Activated T-helper 1 cell treated with anti-CD3 and anti-CD28 coated beads, Interleukin-12 subunit alpha, Interleukin-12 subunit beta, Interleukin-2, Interleukin-4 antibody, amounts not matched to agents 30 ng/mL and 10 ng/mL and 1 ng/mL, durations not matched to agents 14 hours and 24 hours and 36 hours (primary cell): ENCODE measurements at regions of chr11 and their contacts with region 1.

Region 1: GRCh38 chr11:128290106-128290840 is 297.1 kb downstream of the ETS1 start:
- DNase-seq: peak; percentile 76
- H3K4me3 Mint-ChIP-seq: peak overlapping the region; percentile 90
- H3K27ac Mint-ChIP-seq: peak overlapping the region; percentile 98
- H3K4me1 Mint-ChIP-seq: peaks cover 100% of the 10 kb centered on the region
- H3K27me3 Mint-ChIP-seq: peaks cover 1% of the 10 kb centered on the region

Region 2: DNA sequence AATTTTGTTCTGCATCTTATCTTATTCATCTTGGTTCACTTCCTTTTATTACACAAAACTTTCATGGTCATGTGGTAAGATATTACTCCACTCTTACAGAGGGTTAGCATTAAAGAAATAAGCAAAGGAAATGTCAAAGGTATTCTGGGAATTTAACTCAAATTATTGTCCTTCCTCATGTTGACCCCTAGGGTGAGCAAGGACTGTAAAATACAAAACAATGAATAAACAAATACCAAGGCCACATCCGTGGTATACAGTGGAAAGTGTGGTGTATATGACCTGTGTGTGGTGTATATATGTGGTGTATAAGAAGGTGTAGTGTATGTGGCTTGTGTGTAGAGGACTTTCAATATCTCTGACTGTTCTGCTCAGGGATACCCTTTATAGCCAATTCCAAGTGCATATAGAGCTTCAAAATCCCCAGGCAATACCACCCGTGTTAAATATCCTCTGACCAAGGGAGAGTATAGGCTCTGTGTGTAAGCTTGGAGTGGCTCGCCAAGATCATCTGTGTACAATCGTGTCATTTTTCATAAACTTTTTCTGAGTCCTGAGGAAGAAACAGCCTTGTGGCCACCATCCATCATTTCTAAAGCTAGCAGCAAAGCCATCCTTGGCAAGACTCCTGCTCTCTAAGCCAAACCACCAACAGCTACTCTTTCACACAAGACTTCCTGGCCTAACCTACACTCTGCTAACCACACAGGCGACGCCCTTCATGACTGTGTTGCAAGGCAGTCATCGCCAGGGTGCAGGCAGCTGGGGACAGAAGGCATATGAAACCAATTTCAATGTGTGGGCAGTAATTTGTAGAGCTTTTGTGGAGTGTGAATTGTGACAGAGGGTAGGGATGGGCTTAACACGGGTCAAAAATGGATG is 250.9 kb before region 1 on chr11:
- intact Hi-C with region 1: loop called (anchors 1 kb)
- DNase-seq: peak; percentile 77
- H3K4me3 Mint-ChIP-seq: peak overlapping the region; percentile 68
- H3K27ac Mint-ChIP-seq: peak overlapping the region; percentile 92
- H3K4me1 Mint-ChIP-seq: peaks cover 34% of the 10 kb centered on the region
- H3K27me3 Mint-ChIP-seq: no peaks in the 10 kb centered on the region

Region 3: DNA sequence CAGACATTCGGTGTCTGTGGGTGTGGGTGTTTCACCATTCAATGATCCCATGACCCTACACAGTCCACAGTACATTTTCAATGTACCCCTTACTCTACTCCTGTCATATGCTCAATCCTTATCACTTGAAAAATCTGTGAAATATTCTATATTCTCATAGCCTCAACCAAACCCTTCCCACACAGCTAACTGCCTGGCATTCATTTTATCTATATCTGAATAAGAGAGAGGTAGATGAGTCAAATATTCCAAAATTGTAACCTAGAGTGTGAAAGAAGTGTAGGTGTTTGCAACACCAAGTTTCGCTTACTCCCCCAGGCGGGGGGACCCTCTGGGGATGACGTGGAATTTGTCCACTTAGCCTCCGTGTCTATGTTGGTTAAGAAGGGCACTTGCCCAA is 57.7 kb before region 1 on chr11:
- intact Hi-C with region 1: loop called (anchors 1 kb)
- DNase-seq: no peak
- H3K4me3 Mint-ChIP-seq: peak overlapping the region; percentile 58
- H3K27ac Mint-ChIP-seq: peak overlapping the region; percentile 85
- H3K4me1 Mint-ChIP-seq: peaks cover 58% of the 10 kb centered on the region
- H3K27me3 Mint-ChIP-seq: peaks cover 2% of the 10 kb centered on the region

Region 4: GRCh38 chr11:128365044-128365443 is 74.8 kb after region 1 on chr11:
- intact Hi-C with region 1: no loop called
- DNase-seq: no peak
- H3K4me3 Mint-ChIP-seq: no peak overlapping the region
- H3K27ac Mint-ChIP-seq: no peak overlapping the region
- H3K4me1 Mint-ChIP-seq: peaks cover 10% of the 10 kb centered on the region
- H3K27me3 Mint-ChIP-seq: peaks cover 2% of the 10 kb centered on the region

Region 5: DNA sequence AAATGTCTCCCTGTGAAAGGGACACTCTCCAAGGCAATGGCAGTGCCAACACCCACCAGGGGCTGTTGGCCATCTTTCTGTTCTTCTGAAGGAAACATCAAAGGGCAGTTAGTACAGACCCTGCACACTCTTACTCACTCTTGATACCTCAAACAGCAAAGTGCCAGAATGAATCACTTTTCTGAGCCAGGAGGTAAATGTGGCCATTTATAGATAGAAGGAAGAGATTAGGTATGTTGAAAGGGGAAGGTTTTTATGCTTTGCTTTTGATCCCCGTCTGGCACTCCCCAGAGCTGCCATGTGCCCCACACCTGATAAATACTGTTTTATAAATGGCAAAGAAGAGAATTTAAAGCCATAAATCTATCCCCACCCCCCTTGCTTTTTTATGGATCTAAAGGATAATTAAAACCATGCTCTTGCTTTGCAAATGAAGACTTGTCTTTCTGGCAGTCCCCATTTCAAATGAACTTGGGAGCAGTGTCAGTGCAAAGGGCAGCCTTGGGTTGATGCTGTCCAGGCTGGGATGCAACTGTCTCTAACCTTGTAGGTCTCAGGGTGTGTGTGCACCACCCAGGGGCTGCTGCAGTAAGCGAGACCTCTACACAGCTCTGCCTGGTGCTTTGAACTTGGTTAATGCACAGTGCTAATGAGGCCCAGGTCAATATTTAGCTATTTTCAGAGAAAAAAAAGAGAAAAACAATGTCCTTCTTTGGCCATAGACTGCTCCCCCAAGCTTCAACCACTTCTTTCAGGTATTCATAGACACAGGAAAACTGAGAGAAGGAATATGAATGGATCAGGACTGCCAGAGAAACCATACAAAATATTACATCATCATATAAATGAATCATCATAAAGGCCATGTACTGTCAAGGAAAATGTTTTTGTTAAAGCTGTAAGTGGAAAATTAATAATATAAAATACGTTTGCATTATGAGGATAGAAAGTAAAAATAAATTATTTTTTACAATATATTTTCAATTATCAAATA is 89.6 kb after region 1 on chr11:
- intact Hi-C with region 1: loop called (anchors 1 kb)
- DNase-seq: peak; percentile 9
- H3K4me3 Mint-ChIP-seq: no peak overlapping the region
- H3K27ac Mint-ChIP-seq: peak overlapping the region; percentile 45
- H3K4me1 Mint-ChIP-seq: peaks cover 28% of the 10 kb centered on the region
- H3K27me3 Mint-ChIP-seq: no peaks in the 10 kb centered on the region

Region 6: GRCh38 chr11:128506999-128507611 is 216.8 kb after region 1 on chr11:
- intact Hi-C with region 1: loop called (anchors 1 kb)
- DNase-seq: no peak
- H3K4me3 Mint-ChIP-seq: peak overlapping the region; percentile 96
- H3K27ac Mint-ChIP-seq: peak overlapping the region; percentile 98
- H3K4me1 Mint-ChIP-seq: peaks cover 100% of the 10 kb centered on the region
- H3K27me3 Mint-ChIP-seq: peaks cover 1% of the 10 kb centered on the region

Region 7: GRCh38 chr11:128695539-128696221 is 405.4 kb after region 1 on chr11:
- intact Hi-C with region 1: loop called (anchors 1 kb)
- DNase-seq: peak; percentile 38
- H3K4me3 Mint-ChIP-seq: peak overlapping the region; percentile 87
- H3K27ac Mint-ChIP-seq: peak overlapping the region; percentile 91
- H3K4me1 Mint-ChIP-seq: peaks cover 74% of the 10 kb centered on the region
- H3K27me3 Mint-ChIP-seq: peaks cover 15% of the 10 kb centered on the region